CD8-positive, alpha-beta memory T cell (primary cell): ENCODE measurements at regions of chr6 and their contacts with region 1.

Region 1: DNA sequence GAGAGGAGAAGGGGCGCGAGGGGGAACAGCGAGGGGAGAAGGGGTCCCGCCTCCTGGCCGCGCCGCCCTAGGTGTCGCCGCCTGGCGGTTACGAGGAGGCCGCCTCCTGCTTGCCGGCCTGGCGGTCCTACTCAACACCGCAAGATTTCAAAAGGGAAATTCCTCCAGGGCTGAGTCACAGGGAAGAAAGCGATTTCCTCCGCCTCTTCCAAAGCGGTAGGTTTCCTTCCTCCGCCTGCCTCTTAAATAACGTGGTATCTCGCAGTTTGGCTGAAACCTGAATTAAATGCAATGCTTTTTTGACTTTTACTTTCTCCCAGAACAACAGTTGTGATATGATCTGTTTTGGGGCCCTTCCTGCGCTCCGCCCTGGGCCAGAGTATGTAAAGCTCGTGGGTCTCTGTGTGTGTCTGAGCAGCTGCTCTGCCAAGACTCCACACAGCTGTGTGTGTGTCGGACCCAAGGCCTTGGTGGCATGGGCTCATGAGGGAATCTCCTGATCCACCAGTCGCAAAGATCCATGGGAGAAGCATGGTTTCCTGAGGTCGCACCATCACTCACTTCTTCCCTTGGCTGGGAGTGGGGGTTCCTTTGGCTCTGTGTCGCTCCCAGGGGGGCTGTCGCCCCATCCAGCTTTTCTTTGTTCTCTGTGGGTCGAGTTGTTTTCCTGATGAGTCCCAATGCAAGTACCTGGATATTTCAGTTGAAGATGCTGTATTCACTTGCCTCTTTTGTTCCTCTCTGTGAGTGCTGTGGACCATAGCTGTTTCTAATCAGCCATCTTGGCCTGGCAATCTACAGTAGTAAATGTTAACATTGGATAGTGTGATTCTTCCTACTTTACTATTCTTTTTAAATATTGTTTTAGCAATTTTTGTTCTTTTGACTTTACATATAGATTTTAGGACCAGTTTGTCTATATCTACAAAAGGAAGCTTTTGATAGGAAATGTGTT is 31.6 kb upstream of the NOTCH4 start:
- DNase-seq: peak; percentile 31 to 66 (median 35)
- H3K4me3 ChIP-seq: peak overlapping the region; percentile 32
- H3K4me3 Mint-ChIP-seq: peak overlapping the region in 6 of 7 donors; percentile 55 to 82 (median 75)
- H3K27ac ChIP-seq: no peak overlapping the region
- H3K27ac Mint-ChIP-seq: peak overlapping the region in 7 of 8 donors; percentile 12 to 74 (median 43)
- H3K4me1 ChIP-seq: peaks cover 9% of the 10 kb centered on the region
- H3K4me1 Mint-ChIP-seq: peaks cover 9 to 24% (median 17%) of the 10 kb centered on the region in 3 donors
- H3K27me3 ChIP-seq: no peaks in the 10 kb centered on the region
- H3K27me3 Mint-ChIP-seq: peaks cover 3 to 12% of the 10 kb centered on the region in 2 donors

Region 2: DNA sequence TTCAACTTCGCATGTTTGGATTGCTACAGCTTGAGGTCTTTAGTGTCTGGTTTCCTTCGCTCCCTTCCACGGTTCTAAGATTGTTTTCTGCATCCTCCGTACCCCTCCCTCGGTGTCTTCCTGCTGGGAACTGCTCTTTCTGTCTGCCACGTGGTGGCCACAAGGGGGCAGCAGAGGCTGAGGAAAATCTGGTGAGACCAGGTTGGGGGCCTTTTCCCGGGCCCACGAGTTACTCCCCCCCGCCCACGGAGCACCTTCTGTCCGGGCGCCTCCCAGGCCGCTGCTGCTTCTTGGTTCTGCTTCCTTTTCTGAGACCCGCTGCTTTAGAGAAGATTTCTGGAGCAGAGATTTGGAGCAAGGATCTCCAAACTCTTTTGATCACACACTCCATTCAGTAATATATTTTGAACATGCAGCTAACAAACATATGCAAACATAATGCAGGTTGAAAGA is 10.5 kb before region 1 on chr6:
- CTCF ChIA-PET with region 1: interaction called, 13 read pairs
- POLR2A ChIA-PET with region 1: no interaction called
- DNase-seq: peak; percentile 47 to 77 (median 59)
- H3K4me3 ChIP-seq: no peak overlapping the region
- H3K4me3 Mint-ChIP-seq: peak overlapping the region; percentile 17 to 72 (median 45)
- H3K27ac ChIP-seq: no peak overlapping the region
- H3K27ac Mint-ChIP-seq: peak overlapping the region in 1 of 8 donors; percentile 82
- H3K4me1 ChIP-seq: peaks cover 6% of the 10 kb centered on the region
- H3K4me1 Mint-ChIP-seq: peaks cover 6 to 9% (median 7%) of the 10 kb centered on the region in 3 donors
- H3K27me3 ChIP-seq: no peaks in the 10 kb centered on the region
- H3K27me3 Mint-ChIP-seq: peaks cover 3 to 5% of the 10 kb centered on the region in 2 donors